MCF 10A (cell line): ENCODE measurements at regions of chr11 and their contacts with region 1.

Region 1: DNA sequence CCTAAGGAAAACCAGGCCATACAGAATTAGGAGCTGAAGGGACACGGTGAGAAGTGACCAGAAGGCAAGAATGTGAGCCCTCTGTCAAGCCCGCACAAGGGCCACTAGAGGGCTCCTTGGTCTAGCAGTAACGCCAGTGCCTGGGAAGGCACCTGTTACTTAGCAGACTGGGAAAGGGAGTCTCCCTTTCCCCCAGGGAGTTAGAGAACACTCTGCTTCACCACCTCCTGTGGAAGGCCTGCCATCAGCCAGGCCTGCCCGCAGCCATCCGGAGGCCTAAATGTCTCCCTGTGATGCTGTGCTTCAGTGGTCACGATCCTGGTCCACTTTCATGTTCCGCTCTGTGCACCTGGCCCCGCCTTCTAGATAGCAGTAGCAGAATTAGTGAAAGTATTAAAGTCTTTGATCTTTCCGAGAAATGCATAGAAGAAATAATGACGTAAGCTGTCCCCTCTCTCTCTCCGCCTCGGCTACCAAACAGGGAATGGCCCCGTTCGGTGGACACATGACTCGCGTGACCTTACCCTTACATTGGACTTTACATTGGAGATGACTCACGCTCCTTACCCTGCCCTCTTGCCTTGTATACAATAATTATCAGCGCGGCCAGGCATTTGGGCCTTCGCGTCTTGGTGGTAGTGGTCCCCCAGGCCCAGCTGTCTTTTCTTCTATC is 10.7 kb upstream of the GSTP1 start:
- DNase-seq: peak; percentile 78
- H3K4me3 Mint-ChIP-seq: no peak overlapping the region
- H3K27ac Mint-ChIP-seq: no peak overlapping the region
- H3K4me1 Mint-ChIP-seq: peaks cover 7% of the 10 kb centered on the region
- H3K27me3 Mint-ChIP-seq: no peaks in the 10 kb centered on the region
- CTCF ChIP-seq: peak; percentile 87

Region 2: DNA sequence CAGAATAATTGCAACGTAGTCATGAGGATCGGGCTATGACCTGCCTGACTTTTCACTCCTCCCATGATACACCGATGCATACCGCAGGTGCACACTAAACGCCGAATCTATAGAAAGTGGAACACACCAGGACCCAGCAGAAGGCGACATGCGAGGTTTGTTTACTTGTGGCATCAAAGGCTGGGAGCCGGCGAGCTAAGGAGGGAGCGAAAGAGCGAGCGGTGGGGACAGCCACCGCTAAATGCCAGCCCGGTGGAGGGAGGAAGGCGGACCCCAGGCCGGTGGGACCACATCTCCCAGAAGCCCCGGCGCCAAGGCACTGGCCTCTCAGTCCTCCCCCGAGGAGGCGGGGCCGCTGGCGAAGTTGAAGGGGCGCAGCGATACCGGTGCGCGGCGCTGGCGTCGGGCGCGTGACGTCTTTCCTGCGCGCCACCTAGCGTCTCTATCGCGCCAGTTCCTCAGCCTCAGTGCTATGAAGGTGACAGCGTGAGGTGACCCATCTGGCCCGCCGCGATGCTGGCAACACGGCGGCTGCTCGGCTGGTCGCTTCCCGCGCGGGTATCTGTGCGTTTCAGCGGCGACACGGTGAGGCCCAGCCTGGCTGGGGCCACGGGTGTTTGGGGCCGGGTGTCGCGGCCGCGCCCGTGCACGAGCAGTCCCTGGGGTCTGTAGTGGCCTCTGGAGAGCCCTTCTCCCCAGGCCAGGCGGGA is 33.8 kb after region 1 on chr11 and contains the start of gene NDUFV1:
- CTCF ChIA-PET with region 1: interaction called, 16 read pairs
- POLR2A ChIA-PET with region 1: no interaction called
- intact Hi-C with region 1: loop called (anchors 1 kb)
- DNase-seq: peak; percentile 91
- H3K4me3 Mint-ChIP-seq: peak within 1 kb of the TSS; percentile 80
- H3K27ac Mint-ChIP-seq: peak within 1 kb of the TSS; percentile 88
- H3K4me1 Mint-ChIP-seq: no peaks in the 10 kb centered on the region
- H3K27me3 Mint-ChIP-seq: no peaks in the 10 kb centered on the region
- CTCF ChIP-seq: peak; percentile 38
- total RNA-seq, gene NDUFV1: 158 and 223 TPM in 2 replicates